ENCODE measurements at regions of chr18 and their contacts with region 1.

Region 1: GRCh38 chr18:10851824-10852319 is 297.5 kb downstream of the PIEZO2 start:
- DNase-seq: no peak
- ATAC-seq: peak; percentile 29

Region 2: GRCh38 chr18:10682368-10682714 is 169.5 kb before region 1 on chr18:
- intact Hi-C with region 1: no loop called
- DNase-seq: no peak
- ATAC-seq: no peak

Region 3: GRCh38 chr18:10953672-10954071 is 101.8 kb after region 1 on chr18:
- intact Hi-C with region 1: no loop called
- DNase-seq: no peak
- ATAC-seq: no peak

Region 4: DNA sequence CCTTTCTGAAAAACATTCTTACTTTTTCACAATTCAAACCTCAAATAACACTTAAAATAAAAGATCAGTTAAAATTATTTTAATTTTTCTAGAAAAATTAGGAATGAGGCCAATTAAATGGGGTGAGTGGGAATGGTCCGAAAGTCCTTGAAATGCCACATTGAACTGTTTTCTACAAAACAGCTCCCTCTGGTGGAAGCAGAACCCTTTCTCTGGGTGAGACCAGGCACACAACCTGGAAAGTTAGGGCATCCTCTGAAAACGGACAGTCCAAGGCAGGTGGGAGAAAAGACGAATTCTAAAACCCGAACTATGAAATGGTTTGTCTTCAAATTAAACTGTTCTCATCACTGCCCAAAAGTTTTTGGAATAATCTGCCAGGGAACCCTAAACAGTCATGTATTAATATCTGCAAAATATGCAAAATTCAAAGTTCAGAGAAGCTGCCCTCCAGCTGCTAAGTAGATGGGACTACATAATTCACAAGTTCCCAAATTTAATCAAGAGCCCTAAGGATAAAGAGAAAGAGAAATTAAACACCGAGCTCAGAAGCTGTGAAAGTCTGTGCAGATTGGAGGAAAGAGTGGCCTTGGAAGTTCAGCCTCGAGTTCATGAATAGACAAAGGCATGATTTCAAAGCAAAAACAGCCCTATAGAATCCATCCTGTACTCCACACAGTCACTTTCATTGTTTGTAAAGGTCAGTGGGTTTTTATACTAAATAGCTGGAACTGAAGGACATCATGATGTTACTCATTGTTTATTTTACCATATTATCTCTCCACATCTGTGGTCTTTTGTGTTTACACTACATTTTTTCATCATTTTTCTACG is 189.2 kb after region 1 on chr18:
- intact Hi-C with region 1: loop called (anchors 5 kb)
- DNase-seq: no peak
- ATAC-seq: peak; percentile 61

Region 5: GRCh38 chr18:11163665-11164064 is 311.8 kb after region 1 on chr18:
- intact Hi-C with region 1: no loop called
- DNase-seq: peak; percentile 63
- ATAC-seq: peak; percentile 66

Measured in left ventricle myocardium superior (tissue), 1 donor.